ENCODE measurements at regions of chr12 and their contacts with region 1.

Region 1: GRCh38 chr12:51368640-51369517 is 22.3 kb downstream of the GALNT6 start:
- DNase-seq: peak; percentile 74 to 98 (median 84)
- ATAC-seq: peak; percentile 94
- H3K4me3 ChIP-seq: peak overlapping the region; percentile 42
- H3K4me3 Mint-ChIP-seq: peak overlapping the region; percentile 66
- H3K27ac ChIP-seq: peak overlapping the region in 1 of 2 donors; percentile 59
- H3K27ac Mint-ChIP-seq: peak overlapping the region; percentile 89
- H3K4me1 ChIP-seq: peaks cover 45% of the 10 kb centered on the region
- H3K4me1 Mint-ChIP-seq: peaks cover 67% of the 10 kb centered on the region
- H3K27me3 ChIP-seq: no peaks in the 10 kb centered on the region
- H3K27me3 Mint-ChIP-seq: no peaks in the 10 kb centered on the region
- CTCF ChIP-seq: no peak

Region 2: GRCh38 chr12:51247523-51248206 is 121.2 kb before region 1 on chr12:
- CTCF ChIA-PET with region 1: no interaction called
- POLR2A ChIA-PET with region 1: no interaction called
- intact Hi-C with region 1: no loop called
- DNase-seq: no peak
- ATAC-seq: no peak
- H3K4me3 ChIP-seq: no peak overlapping the region
- H3K4me3 Mint-ChIP-seq: peak overlapping the region; percentile 6
- H3K27ac ChIP-seq: peak overlapping the region; percentile 9 to 50
- H3K27ac Mint-ChIP-seq: peak overlapping the region; percentile 84
- H3K4me1 ChIP-seq: peaks cover 43% of the 10 kb centered on the region
- H3K4me1 Mint-ChIP-seq: peaks cover 56% of the 10 kb centered on the region
- H3K27me3 ChIP-seq: no peaks in the 10 kb centered on the region
- H3K27me3 Mint-ChIP-seq: no peaks in the 10 kb centered on the region
- CTCF ChIP-seq: no peak

Region 3: GRCh38 chr12:51320695-51321320 is 48.1 kb before region 1 on chr12:
- CTCF ChIA-PET with region 1: no interaction called
- POLR2A ChIA-PET with region 1: interaction called, 13 read pairs
- intact Hi-C with region 1: loop called in 1 of 2 experiments (anchors 2 kb)
- DNase-seq: peak in 3 of 14 experiments; percentile 39 to 62 (median 41)
- ATAC-seq: no peak
- H3K4me3 ChIP-seq: peak overlapping the region; percentile 82
- H3K4me3 Mint-ChIP-seq: peak overlapping the region; percentile 97
- H3K27ac ChIP-seq: peak overlapping the region; percentile 72 to 91
- H3K27ac Mint-ChIP-seq: peak overlapping the region; percentile 87
- H3K4me1 ChIP-seq: peaks cover 81% of the 10 kb centered on the region
- H3K4me1 Mint-ChIP-seq: peaks cover 86% of the 10 kb centered on the region
- H3K27me3 ChIP-seq: no peaks in the 10 kb centered on the region
- H3K27me3 Mint-ChIP-seq: no peaks in the 10 kb centered on the region
- CTCF ChIP-seq: no peak

Region 4: GRCh38 chr12:51326762-51327439 is 42.0 kb before region 1 on chr12:
- CTCF ChIA-PET with region 1: no interaction called
- POLR2A ChIA-PET with region 1: interaction called, 11 read pairs
- intact Hi-C with region 1: no loop called
- DNase-seq: peak in 4 of 14 experiments; percentile 12 to 67 (median 42)
- ATAC-seq: no peak
- H3K4me3 ChIP-seq: no peak overlapping the region
- H3K4me3 Mint-ChIP-seq: peak overlapping the region; percentile 62
- H3K27ac ChIP-seq: peak overlapping the region; percentile 25 to 48
- H3K27ac Mint-ChIP-seq: peak overlapping the region; percentile 87
- H3K4me1 ChIP-seq: peaks cover 73% of the 10 kb centered on the region
- H3K4me1 Mint-ChIP-seq: peaks cover 79% of the 10 kb centered on the region
- H3K27me3 ChIP-seq: no peaks in the 10 kb centered on the region
- H3K27me3 Mint-ChIP-seq: no peaks in the 10 kb centered on the region
- CTCF ChIP-seq: no peak

Region 5: GRCh38 chr12:51383281-51383905 is 14.5 kb after region 1 on chr12:
- CTCF ChIA-PET with region 1: interaction called, 3 read pairs
- POLR2A ChIA-PET with region 1: interaction called, 13 read pairs
- intact Hi-C with region 1: no loop called
- DNase-seq: no peak
- ATAC-seq: peak; percentile 77
- H3K4me3 ChIP-seq: no peak overlapping the region
- H3K4me3 Mint-ChIP-seq: no peak overlapping the region
- H3K27ac ChIP-seq: no peak overlapping the region
- H3K27ac Mint-ChIP-seq: peak overlapping the region; percentile 51
- H3K4me1 ChIP-seq: peaks cover 45% of the 10 kb centered on the region
- H3K4me1 Mint-ChIP-seq: peaks cover 68% of the 10 kb centered on the region
- H3K27me3 ChIP-seq: no peaks in the 10 kb centered on the region
- H3K27me3 Mint-ChIP-seq: no peaks in the 10 kb centered on the region
- CTCF ChIP-seq: no peak

Region 6: DNA sequence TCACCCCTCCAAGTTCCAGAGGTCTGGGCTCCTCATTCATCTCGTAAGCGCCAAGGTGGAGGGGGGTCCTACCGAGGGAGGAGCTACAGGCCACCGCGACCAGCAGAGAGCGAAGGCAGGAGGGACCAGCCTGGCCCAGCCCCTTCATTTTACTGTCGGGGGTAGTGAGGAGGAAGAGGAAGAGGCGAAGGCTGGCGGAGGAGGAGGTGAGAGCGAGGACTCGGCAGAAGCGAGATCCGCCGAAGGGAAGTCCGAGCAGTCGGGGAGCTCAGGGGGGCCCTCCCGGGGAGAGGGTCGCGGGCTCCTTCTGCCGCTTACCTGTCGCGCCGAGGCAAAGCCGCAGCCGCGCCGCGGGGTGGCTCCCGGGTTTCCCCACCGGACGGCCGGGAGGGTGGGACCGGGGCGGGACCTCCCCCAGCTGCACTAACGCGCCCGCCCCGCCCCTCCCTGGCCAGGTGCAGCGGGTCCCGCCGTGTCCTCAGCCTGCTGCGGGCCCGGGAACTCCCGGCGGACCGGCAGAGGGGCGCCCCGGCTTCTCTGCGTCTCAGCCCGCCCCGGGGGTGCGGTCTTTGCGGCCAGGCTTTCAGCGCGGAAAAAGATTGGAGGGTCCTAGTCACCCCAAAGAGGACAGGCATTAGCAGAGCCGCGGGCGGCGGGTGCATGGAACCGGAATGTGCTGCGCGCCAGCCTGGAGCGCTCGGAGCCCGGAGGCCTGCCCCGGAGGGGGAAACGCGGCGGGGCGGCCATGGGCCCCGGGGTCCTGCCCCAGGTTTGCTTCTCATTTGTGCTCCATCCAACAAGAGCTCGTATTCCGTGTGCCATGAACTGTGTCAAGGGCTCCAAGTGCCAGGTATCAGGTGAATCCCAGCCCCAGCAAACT is 22.6 kb after region 1 on chr12 and contains the start of gene GALNT6:
- CTCF ChIA-PET with region 1: interaction called, 4 read pairs
- POLR2A ChIA-PET with region 1: interaction called, 57 read pairs
- intact Hi-C with region 1: loop called (anchors 2 kb)
- DNase-seq: peak; percentile 30 to 91 (median 64)
- ATAC-seq: peak; percentile 62
- H3K4me3 ChIP-seq: peak within 1 kb of the TSS; percentile 81
- H3K4me3 Mint-ChIP-seq: peak within 1 kb of the TSS; percentile 96
- H3K27ac ChIP-seq: peak within 1 kb of the TSS; percentile 48 to 53
- H3K27ac Mint-ChIP-seq: peak within 1 kb of the TSS; percentile 93
- H3K4me1 ChIP-seq: peaks cover 77% of the 10 kb centered on the region
- H3K4me1 Mint-ChIP-seq: peaks cover 81% of the 10 kb centered on the region
- H3K27me3 ChIP-seq: no peaks in the 10 kb centered on the region
- H3K27me3 Mint-ChIP-seq: no peaks in the 10 kb centered on the region
- CTCF ChIP-seq: no peak
- total RNA-seq, gene GALNT6: 10.2 to 13.7 TPM

Region 7: GRCh38 chr12:51970904-51971646 is 602.2 kb after region 1 on chr12:
- CTCF ChIA-PET with region 1: no interaction called
- POLR2A ChIA-PET with region 1: no interaction called
- intact Hi-C with region 1: no loop called
- DNase-seq: peak in 7 of 14 experiments; percentile 2 to 70 (median 33)
- ATAC-seq: peak; percentile 71
- H3K4me3 ChIP-seq: no peak overlapping the region
- H3K4me3 Mint-ChIP-seq: peak overlapping the region; percentile 72
- H3K27ac ChIP-seq: no peak overlapping the region
- H3K27ac Mint-ChIP-seq: peak overlapping the region; percentile 67
- H3K4me1 ChIP-seq: peaks cover 57% of the 10 kb centered on the region
- H3K4me1 Mint-ChIP-seq: peaks cover 72% of the 10 kb centered on the region
- H3K27me3 ChIP-seq: no peaks in the 10 kb centered on the region
- H3K27me3 Mint-ChIP-seq: no peaks in the 10 kb centered on the region
- CTCF ChIP-seq: peak; percentile 67